Posterior cingulate gyrus (tissue), 11 donors: ENCODE measurements at regions of chr5 and their contacts with region 1.

Region 1: DNA sequence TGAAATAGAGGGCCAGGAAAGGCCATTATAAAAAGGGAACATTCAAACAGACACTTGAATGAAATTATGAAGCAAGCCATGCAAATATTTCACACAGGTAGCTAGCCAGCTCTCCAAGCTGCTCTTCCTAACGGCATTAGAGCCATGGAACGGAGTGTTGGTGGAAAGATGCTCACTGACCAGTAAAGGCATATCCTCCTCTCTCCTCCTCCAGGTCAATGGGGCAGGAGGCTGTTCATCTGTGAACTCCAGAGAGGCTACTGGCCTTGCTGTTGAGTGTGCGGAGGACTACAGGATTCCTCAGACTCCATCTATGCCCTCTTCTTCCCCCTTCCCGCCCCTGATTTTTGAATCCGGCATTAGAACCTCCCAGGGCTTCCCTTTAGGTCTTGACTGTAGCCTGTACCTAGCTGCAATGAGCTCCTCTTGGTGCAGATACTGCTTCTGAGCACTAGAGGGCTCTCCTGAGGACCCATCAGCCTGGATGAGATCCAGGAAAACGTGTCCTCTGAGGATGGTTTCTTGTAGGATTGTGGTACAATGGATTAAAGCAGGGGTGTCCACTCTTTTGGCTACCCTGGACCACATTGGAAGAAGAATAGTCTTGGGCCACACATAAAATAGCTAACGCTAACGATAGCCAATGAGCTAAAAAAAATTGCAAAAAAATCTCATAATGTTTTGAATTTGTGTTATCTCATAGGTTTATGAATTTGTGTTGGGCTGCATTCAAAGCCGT is 162.2 kb downstream of the SREK1 start:
- DNase-seq: peak in 5 of 10 donors; percentile 40 to 92 (median 45)

Region 2: DNA sequence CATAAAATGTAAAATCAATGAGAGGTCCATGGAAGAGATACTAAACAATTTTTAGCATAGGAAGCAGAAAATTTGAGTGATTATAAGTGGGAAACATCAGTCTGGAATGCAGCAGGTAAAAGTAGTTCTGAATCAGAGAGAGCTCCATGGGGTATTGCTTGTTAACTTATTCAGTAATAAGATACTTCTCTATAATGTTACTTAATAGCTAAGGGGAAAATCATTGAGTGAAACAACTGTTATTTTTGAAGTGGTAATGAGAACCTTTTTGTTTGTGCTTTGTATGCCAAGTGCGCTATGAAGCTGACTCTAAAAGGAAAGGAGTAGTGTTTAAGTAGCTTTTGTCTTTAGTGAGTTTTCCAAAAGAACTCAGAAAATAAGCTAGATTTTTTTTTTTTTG is 284.7 kb before region 1 on chr5:
- intact Hi-C with region 1: no loop called
- DNase-seq: no peak

Region 3: GRCh38 chr5:66223636-66224035 is 82.6 kb before region 1 on chr5:
- intact Hi-C with region 1: no loop called
- DNase-seq: peak in 5 of 10 donors; percentile 16 to 88 (median 62)

Region 4: DNA sequence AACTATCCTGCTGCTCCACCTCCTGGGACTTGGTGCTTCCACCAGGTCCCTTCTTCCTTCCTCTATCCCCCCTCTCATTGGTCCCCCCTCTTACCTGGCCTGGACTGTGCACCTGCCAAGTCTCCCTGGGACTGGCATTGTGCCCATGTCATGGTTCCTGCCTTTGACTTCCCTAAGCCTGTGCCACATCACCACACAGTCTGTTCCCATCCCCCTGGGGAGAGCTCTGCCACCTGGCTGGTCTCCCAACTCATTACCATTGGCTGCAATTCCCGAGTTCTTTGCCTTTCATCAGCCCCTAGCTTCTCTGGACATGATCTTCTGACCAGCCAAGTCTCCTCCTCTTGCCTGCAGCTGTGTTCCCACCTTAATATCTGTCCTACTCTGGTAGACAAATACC is 18.1 kb after region 1 on chr5:
- intact Hi-C with region 1: no loop called
- DNase-seq: no peak

Region 5: GRCh38 chr5:66757188-66757833 is 451.0 kb after region 1 on chr5:
- intact Hi-C with region 1: loop called (anchors 2 kb)
- DNase-seq: peak in 3 of 10 donors; percentile 17 to 34 (median 25)

Region 6: GRCh38 chr5:66769839-66770617 is 463.8 kb after region 1 on chr5:
- intact Hi-C with region 1: loop called (anchors 5 kb)
- DNase-seq: peak in 7 of 10 donors; percentile 17 to 90 (median 31)